Calu3 (cell line): ENCODE measurements at regions of chrX and their contacts with region 1.

Region 1: DNA sequence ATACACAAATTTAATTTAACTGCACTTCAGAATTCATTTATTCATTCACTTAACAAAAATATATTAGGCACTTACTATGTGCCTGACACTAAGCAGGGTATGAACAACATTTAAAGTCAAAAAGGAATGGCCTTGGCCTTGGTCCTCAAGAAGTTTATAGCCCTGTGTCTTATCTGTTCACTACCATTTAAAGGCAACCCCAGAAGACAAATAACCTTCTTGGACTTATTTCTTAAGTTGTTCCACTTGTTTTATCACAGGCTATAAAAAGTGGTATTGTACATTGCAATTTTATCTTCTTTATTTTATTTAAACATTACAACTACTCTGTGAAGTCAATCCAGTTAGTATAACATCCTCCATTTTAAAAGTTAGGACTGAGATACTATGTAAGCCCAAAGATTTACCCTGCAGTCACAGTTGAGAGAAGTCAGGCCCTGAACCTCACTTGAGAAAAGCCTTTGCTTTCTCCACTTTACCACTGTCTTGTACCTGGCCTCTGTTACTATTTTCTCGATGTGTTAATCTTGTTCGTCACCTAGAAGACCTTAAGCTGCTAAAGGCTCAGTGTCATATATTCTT is 305.6 kb upstream of the DIPK2B start:
- DNase-seq: no peak
- H3K4me3 Mint-ChIP-seq: no peak overlapping the region
- H3K27ac Mint-ChIP-seq: peak overlapping the region; percentile 56
- H3K4me1 Mint-ChIP-seq: peaks cover 41% of the 10 kb centered on the region
- H3K27me3 Mint-ChIP-seq: no peaks in the 10 kb centered on the region
- CTCF ChIP-seq: no peak

Region 2: GRCh38 chrX:45479835-45480422 is 26.3 kb before region 1 on chrX:
- CTCF ChIA-PET with region 1: no interaction called
- intact Hi-C with region 1: loop called (anchors 2 kb)
- DNase-seq: peak; percentile 28
- H3K4me3 Mint-ChIP-seq: peak overlapping the region; percentile 29
- H3K27ac Mint-ChIP-seq: peak overlapping the region; percentile 99
- H3K4me1 Mint-ChIP-seq: peaks cover 11% of the 10 kb centered on the region
- H3K27me3 Mint-ChIP-seq: no peaks in the 10 kb centered on the region
- CTCF ChIP-seq: no peak

Region 3: DNA sequence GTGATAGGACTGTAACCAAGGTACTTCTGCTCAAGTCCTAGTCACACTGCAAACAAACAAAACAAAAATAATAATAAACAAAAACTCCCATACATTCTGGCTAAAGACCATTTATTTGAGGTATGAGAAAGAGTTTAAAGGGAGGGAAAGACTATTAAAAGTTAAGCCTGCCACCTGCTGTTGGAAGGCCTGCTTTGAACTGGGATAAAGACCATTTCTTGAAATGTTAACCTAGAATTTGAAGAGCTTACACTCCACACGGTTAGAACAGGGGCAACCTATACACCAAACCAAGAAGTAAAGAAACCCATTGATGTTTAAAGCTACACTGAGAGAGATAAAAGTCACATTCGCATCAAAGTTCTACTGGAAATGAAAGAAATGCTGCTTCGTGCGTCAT is 243.1 kb after region 1 on chrX:
- CTCF ChIA-PET with region 1: no interaction called
- intact Hi-C with region 1: no loop called
- DNase-seq: no peak
- H3K4me3 Mint-ChIP-seq: peak overlapping the region; percentile 29
- H3K27ac Mint-ChIP-seq: peak overlapping the region; percentile 54
- H3K4me1 Mint-ChIP-seq: peaks cover 39% of the 10 kb centered on the region
- H3K27me3 Mint-ChIP-seq: no peaks in the 10 kb centered on the region
- CTCF ChIP-seq: no peak